Right ventricle myocardium inferior (tissue), 1 donor: ENCODE measurements at regions of chr3 and their contacts with region 1.

Region 1: DNA sequence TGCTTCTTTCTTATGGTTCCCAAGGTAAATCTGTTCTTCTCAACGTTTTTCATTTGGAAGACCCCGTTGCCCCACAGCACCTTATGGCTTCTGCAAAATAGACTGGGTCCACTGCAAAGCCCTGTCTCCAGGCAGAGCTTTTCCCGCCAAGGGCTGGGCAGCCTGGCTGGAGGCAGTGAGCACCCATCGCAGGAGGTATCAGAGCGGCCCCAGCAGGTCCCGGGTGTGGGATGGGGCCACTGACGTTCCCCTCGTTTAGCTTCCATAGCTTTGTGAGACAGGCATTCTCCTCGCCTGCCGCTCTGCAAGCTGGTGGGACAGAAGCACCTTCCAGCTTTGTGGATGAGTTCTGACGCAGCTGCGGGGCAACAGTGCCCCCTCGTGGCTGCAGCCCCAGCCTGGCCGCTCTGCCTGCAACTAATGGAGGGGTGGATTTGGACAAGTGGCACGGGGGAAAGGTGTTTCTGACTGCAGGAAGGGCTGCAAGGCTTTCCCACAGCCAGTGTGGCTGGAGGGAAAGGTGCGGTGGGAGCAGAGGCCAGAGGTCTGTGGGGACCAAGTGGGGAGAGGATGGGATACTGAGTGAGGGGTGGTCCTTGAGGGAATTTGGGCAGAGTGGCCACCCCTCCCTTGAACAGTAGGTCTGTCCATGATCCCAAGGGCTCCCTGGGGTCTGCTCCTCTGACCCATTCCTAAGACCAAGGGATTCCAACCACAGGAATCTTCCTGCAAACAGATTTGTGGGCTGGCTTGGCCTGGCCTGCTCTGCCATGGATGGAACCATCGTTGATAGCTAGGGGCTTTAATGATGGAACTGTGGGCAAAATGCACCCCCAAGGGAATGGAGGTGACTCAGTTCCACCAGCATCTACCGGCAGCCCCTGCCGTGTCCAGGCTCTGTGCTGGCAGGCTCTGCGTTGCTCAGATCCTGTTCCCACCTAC is 99.4 kb downstream of the FBLN2 start:
- DNase-seq: peak; percentile 83
- ATAC-seq: peak; percentile 75

Region 2: GRCh38 chr3:13495921-13496723 is 152.2 kb before region 1 on chr3:
- intact Hi-C with region 1: loop called (anchors 1 kb)
- DNase-seq: peak; percentile 86
- ATAC-seq: peak; percentile 92

Region 3: DNA sequence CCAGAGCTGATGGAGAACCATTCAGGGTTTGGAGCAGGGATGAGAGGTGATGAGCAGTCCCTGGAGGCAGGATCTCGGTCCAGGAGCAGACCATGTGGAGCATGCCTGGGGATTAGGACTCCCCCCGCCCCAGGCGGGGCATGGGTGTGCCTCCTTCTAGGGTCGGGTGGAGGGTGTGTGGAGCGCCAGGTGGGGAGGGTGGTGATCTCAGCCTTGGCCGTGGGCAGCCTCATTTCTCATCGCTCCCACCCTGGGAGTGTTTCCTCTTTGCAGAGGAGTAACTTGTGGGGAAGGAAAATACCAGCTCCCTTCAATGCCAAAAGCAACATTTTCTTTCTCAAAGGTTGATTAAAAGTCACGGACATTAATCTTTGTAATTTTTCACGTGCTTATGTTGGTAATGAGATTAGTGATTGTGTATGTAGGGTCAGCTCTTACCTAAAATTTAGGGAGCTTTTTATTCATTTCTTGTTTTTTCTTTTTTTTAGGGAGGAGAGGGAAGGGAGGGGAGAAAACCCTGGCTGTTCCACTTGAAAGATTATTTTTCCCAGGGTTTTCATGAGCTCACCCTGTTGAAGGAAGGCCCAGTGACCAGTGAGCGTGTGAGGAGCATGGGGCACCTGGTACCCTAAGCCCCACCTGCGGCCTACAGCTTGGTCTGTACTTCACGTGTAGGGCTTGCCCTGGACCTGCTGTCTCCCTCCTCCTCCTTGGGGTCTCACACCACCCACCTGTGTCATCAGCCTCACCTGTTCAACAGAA is 88.4 kb before region 1 on chr3:
- intact Hi-C with region 1: loop called (anchors 5 kb)
- DNase-seq: peak; percentile 41
- ATAC-seq: peak; percentile 65